CD8-positive, alpha-beta T cell (primary cell): ENCODE measurements at regions of chr1 and their contacts with region 1.

Region 1: DNA sequence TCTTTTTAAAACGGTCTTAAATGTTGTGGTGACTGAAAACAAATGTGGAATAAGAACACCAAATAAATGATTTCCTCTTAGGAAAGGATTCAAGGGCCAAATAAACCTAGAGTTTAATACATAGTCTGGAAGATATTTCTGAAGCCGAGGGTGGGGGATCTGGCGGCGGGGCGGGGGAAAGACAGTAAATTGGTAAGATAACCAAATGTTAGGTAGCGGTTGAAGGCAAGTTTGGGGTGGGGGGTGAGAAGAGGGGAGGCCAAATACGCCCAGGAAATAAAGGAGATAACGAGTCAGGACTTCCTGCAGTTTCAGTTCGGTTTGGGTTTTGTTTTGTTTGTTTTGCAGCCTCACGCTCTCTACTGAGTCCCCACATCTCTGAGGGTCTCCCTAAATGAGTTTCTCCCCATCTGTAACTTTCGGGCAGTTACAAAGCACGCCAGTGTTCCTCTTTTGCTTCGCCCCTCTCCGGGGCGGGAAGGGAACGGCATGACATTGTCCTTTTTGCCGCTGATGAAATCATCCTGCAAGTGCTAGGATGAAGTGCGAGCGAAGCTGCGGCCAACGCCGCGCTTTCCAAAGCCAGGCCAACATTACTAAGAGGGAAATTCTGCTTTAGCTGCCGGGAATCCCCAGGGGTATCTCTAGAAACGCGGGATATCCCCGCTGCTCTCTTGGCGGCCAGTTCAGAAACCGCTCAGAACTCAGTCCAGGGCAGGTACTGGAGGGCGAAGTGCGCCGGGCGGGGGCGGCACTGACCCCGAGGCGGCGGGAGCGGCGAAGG is 844 bp downstream of the NIBAN1 start:
- DNase-seq: peak in 8 of 9 experiments; percentile 2 to 89 (median 34)
- ATAC-seq: peak; percentile 48
- H3K4me3 ChIP-seq: peak overlapping the region; percentile 65 to 93
- H3K4me3 Mint-ChIP-seq: peak overlapping the region; percentile 96
- H3K27ac ChIP-seq: peak overlapping the region; percentile 52 to 82
- H3K27ac Mint-ChIP-seq: peak overlapping the region; percentile 89
- H3K4me1 ChIP-seq: peaks cover 14% of the 10 kb centered on the region
- H3K4me1 Mint-ChIP-seq: peaks cover 51% of the 10 kb centered on the region
- H3K27me3 ChIP-seq: no peaks in the 10 kb centered on the region
- H3K27me3 Mint-ChIP-seq: peaks cover 26% of the 10 kb centered on the region
- CTCF ChIP-seq: no peak

Region 2: DNA sequence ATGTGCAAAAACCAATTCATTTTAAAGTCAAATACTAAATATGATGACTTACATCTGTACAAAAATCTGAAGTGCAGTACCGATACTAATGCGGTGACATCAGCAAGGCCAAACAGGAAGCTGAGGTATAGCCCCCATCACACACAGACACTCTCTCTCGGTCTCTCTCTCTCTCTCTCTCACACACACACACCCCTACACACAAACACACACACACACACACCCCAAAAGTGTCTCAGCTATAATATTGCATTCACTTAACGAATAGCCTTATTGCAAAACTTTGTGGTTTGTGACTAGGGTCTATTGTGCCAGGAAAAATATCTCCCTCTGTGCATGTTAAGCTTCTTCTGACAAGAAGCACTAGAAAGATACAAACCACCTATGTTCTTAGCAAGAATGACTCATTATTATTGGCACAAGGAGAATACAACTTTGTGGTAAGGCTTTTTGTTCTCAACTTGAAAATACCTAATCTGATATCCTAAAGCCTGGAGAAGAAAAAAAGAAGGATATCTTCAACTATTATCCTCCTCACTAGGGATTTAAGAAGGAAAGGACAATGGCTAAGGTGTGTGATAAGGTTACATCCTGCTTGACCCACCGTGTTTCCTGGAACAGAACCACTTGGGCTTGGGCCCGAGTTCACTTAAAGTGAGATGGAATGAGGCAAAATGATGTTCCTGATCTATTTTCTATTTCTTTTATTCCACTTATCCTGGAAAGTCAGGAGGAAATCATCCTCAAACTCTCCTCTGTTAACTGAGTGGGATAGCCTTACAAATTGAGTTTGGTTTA is 106.3 kb before region 1 on chr1:
- CTCF ChIA-PET with region 1: no interaction called
- POLR2A ChIA-PET with region 1: interaction called, 7 read pairs
- intact Hi-C with region 1: loop called in 1 of 2 experiments (anchors 5 kb)
- DNase-seq: peak; percentile 14 to 88 (median 63)
- ATAC-seq: peak; percentile 83
- H3K4me3 ChIP-seq: no peak overlapping the region
- H3K4me3 Mint-ChIP-seq: peak overlapping the region; percentile 6
- H3K27ac ChIP-seq: peak overlapping the region; percentile 19 to 71
- H3K27ac Mint-ChIP-seq: peak overlapping the region; percentile 81
- H3K4me1 ChIP-seq: peaks cover 18% of the 10 kb centered on the region
- H3K4me1 Mint-ChIP-seq: peaks cover 36% of the 10 kb centered on the region
- H3K27me3 ChIP-seq: no peaks in the 10 kb centered on the region
- H3K27me3 Mint-ChIP-seq: no peaks in the 10 kb centered on the region
- CTCF ChIP-seq: no peak

Region 3: DNA sequence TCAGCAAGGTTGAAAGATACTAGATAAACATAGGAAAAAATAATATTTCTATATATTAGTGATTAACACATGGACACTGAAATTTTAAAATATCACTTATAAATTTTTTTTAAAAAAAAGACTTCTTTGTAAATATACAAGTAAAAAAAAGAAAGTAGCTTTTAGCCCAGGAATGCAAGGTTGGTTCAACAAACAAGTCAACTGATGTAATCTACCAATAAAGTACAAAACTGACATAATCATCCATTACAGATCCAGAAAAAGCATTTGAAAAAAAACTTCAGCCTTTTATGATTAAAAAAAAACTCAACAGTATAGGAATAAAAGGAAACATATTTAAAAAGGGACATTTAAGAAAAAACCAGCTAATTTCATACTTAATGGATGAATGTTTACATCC is 134.9 kb after region 1 on chr1:
- CTCF ChIA-PET with region 1: no interaction called
- POLR2A ChIA-PET with region 1: no interaction called
- intact Hi-C with region 1: no loop called
- DNase-seq: no peak
- ATAC-seq: no peak
- H3K4me3 ChIP-seq: no peak overlapping the region
- H3K4me3 Mint-ChIP-seq: no peak overlapping the region
- H3K27ac ChIP-seq: no peak overlapping the region
- H3K27ac Mint-ChIP-seq: no peak overlapping the region
- H3K4me1 ChIP-seq: no peaks in the 10 kb centered on the region
- H3K4me1 Mint-ChIP-seq: no peaks in the 10 kb centered on the region
- H3K27me3 ChIP-seq: no peaks in the 10 kb centered on the region
- H3K27me3 Mint-ChIP-seq: no peaks in the 10 kb centered on the region
- CTCF ChIP-seq: no peak

Region 4: GRCh38 chr1:185238447-185238846 is 265.0 kb after region 1 on chr1:
- CTCF ChIA-PET with region 1: no interaction called
- POLR2A ChIA-PET with region 1: no interaction called
- intact Hi-C with region 1: no loop called
- DNase-seq: peak in 2 of 9 experiments; percentile 24 to 55
- ATAC-seq: peak; percentile 38
- H3K4me3 ChIP-seq: no peak overlapping the region
- H3K4me3 Mint-ChIP-seq: no peak overlapping the region
- H3K27ac ChIP-seq: no peak overlapping the region
- H3K27ac Mint-ChIP-seq: no peak overlapping the region
- H3K4me1 ChIP-seq: peaks cover 3% of the 10 kb centered on the region
- H3K4me1 Mint-ChIP-seq: peaks cover 26% of the 10 kb centered on the region
- H3K27me3 ChIP-seq: no peaks in the 10 kb centered on the region
- H3K27me3 Mint-ChIP-seq: no peaks in the 10 kb centered on the region
- CTCF ChIP-seq: peak; percentile 74